Dendritic cell treated with granulocyte-macrophage colony-stimulating factor and Interleukin-4, amounts not matched to agents 40 ng/mL and 50 ng/mL, for 4 days (primary cell): ENCODE measurements at regions of chr3 and their contacts with region 1.

Region 1: GRCh38 chr3:186152889-186153292 is 44.0 kb upstream of the ETV5 start:
- H3K4me3 Mint-ChIP-seq: no peak overlapping the region
- H3K27ac Mint-ChIP-seq: peak overlapping the region; percentile 65
- H3K4me1 Mint-ChIP-seq: peaks cover 39% of the 10 kb centered on the region
- H3K27me3 Mint-ChIP-seq: peaks cover 20% of the 10 kb centered on the region

Region 2: DNA sequence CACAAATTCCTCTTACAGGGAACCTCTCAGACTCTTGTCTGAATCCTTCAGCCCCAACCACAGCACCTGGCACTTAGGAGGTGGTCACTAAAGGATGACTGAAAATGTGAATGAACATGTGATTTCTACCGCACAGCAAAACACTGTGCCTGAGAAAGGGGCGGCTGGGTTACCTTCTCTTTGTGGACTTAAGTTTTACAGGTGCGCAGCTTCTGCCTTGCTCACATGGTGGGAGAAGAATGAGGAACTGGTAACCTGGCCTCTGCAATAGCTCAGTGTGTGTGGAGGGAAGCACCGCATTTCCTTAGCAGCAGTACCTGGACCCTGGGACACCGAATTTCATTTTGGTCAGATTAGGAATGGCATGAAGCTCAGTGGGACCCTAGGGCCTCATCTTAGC is 34.2 kb before region 1 on chr3:
- intact Hi-C with region 1: loop called (anchors 2 kb)
- H3K4me3 Mint-ChIP-seq: no peak overlapping the region
- H3K27ac Mint-ChIP-seq: no peak overlapping the region
- H3K4me1 Mint-ChIP-seq: peaks cover 14% of the 10 kb centered on the region
- H3K27me3 Mint-ChIP-seq: peaks cover 60% of the 10 kb centered on the region

Region 3: DNA sequence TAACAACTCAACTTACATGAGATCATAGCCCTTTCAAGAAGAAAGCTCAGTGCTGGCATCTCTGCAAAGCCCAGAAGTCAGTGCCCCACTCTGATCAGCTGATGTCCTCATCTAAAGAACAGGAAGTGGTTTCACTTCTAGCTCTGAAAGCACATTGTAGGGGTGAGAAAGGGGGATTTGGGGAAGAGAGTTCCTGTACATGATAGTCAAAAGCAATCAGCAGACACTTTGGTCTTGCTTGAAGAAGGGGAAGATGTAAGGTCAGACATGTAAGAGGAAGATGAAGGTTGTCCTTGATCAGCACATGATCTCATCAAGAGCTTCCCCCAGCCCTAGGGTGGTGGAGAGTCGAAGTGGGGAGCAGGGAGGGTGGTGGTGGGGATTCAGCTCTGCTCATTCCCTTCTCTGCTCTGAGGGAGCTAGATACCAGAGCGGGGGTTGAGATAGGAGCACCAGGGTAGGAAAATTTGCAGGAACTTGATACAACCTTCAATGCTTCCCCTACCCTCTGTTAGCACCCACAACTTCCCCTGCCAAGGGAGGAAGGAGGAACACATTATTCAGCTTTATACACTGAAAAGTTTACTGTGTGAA is 32.4 kb after region 1 on chr3:
- intact Hi-C with region 1: loop called (anchors 2 kb)
- H3K4me3 Mint-ChIP-seq: peak overlapping the region; percentile 22
- H3K27ac Mint-ChIP-seq: peak overlapping the region; percentile 85
- H3K4me1 Mint-ChIP-seq: peaks cover 68% of the 10 kb centered on the region
- H3K27me3 Mint-ChIP-seq: no peaks in the 10 kb centered on the region

Region 4: GRCh38 chr3:186254676-186255650 is 102.1 kb after region 1 on chr3:
- intact Hi-C with region 1: no loop called
- H3K4me3 Mint-ChIP-seq: peak overlapping the region; percentile 28
- H3K27ac Mint-ChIP-seq: peak overlapping the region; percentile 29
- H3K4me1 Mint-ChIP-seq: peaks cover 61% of the 10 kb centered on the region
- H3K27me3 Mint-ChIP-seq: peaks cover 3% of the 10 kb centered on the region